ENCODE measurements at regions of chr3 and their contacts with region 1.

Region 1: GRCh38 chr3:73086071-73086494 is 24.6 kb downstream of the EBLN2 start:
- DNase-seq: peak in 2 of 3 donors; percentile 37 to 56
- ATAC-seq: peak; percentile 86 to 89 (median 88)
- H3K4me3 ChIP-seq: no peak overlapping the region
- H3K27ac ChIP-seq: no peak overlapping the region
- H3K4me1 ChIP-seq: no peaks in the 10 kb centered on the region
- H3K27me3 ChIP-seq: no peaks in the 10 kb centered on the region
- CTCF ChIP-seq: peak; percentile 71 to 84 (median 80)
- POLR2A ChIP-seq: no peak

Region 2: DNA sequence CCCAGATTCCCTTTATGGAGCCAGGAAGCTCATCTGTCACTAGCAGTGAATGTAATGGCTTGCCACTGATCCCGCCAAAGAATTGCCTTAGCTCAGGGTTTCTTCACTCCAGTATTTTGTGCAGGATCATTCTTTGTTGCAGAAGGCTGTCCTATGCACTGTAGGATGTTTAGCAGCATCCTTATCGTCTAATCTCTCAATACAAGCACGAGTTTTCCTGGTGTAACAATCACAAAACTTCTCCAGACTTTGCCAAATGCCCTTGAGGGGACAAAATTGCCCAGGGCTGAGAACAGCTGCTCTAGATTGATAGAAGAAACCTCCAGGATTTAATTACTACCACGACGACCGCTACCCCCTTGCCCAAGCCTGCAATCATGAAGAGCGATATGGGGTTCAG is 231.1 kb before region 1 on chr3:
- intact Hi-C with region 1: loop called (anchors 5 to 10 kb)
- DNase-seq: no peak
- ATAC-seq: no peak
- H3K4me3 ChIP-seq: no peak overlapping the region
- H3K27ac ChIP-seq: no peak overlapping the region
- H3K4me1 ChIP-seq: no peaks in the 10 kb centered on the region
- H3K27me3 ChIP-seq: no peaks in the 10 kb centered on the region
- CTCF ChIP-seq: no peak
- POLR2A ChIP-seq: no peak

Region 3: DNA sequence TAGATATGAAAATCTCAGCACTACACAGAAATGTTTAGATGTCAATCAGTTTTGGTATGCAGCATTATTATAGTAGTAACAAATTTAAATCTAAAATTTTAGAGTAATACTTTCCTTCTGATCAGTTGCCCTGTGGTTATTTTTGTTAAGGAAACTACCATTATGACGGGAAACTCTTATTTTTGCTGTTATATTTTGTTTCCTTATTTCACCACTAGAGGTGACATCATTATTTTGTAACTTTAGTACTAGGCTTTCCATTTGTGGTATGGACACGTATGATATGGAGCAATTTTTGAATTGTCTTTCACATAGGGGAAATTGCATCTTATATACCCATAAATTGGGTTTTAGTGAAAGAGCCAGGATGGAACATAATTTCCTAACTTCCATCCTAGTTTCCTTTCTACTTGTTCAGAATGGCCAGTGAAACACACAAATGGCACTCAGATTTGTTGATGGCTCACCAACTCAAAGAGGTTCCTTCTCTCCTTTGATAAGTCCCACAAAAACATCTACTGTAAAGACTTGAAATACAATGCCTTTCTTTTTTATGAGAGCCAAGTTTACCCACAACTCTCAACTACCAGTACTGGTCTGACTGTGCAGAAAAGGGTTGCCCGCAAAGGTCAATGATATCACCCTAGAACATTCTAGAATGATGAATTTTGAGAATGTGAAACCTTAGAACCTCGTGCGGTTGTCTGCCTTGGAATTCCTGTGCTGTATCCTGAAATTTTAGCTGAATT is 108.8 kb before region 1 on chr3:
- intact Hi-C with region 1: no loop called
- DNase-seq: no peak
- ATAC-seq: peak in 1 of 4 donors; percentile 23
- H3K4me3 ChIP-seq: no peak overlapping the region
- H3K27ac ChIP-seq: no peak overlapping the region
- H3K4me1 ChIP-seq: peaks cover 0 to 15% (median 2%) of the 10 kb centered on the region in 4 donors
- H3K27me3 ChIP-seq: no peaks in the 10 kb centered on the region
- CTCF ChIP-seq: peak in 1 of 4 donors; percentile 8
- POLR2A ChIP-seq: no peak